ENCODE measurements at regions of chr7 and their contacts with region 1.

Region 1: GRCh38 chr7:121107923-121108498 is 119.5 kb downstream of the CPED1 start:
- DNase-seq: no peak
- ATAC-seq: peak; percentile 77
- H3K4me3 Mint-ChIP-seq: no peak overlapping the region
- H3K27ac Mint-ChIP-seq: no peak overlapping the region
- H3K4me1 Mint-ChIP-seq: no peaks in the 10 kb centered on the region
- H3K27me3 Mint-ChIP-seq: no peaks in the 10 kb centered on the region
- CTCF ChIP-seq: peak; percentile 83

Region 2: DNA sequence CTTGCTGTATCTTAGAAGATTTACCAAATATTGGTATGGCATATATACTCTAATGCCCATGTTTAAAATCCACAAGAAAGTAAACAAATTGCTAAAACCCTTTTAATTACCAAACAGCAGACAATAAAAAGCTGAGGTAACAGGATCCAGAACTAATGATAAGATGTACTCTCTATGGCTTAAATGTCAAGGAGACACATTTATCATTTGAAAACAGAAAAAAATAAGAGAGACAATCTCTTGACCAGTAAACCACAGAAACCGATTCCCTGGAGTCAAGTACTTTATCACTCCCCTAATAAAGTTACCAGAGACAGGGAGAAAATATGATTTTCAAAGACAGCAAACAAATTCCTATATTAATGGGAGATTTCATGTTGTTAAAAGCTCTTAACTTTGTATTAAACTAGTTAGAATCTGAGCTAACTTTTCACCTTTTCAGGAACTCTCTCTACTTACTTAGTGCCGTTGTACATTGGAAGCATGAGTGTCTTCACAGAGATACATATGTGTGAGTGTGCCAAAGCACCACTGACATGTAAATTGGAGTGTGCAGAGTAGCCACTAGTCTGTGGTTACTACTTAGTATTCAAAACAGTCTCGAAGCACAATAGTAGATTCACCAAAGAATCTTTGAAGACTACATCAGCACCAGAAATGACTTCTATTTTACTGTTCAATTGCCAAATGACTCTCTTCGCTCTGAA is 294.3 kb before region 1 on chr7:
- CTCF ChIA-PET with region 1: no interaction called
- POLR2A ChIA-PET with region 1: no interaction called
- intact Hi-C with region 1: no loop called
- DNase-seq: no peak
- ATAC-seq: no peak
- H3K4me3 Mint-ChIP-seq: no peak overlapping the region
- H3K27ac Mint-ChIP-seq: no peak overlapping the region
- H3K4me1 Mint-ChIP-seq: no peaks in the 10 kb centered on the region
- H3K27me3 Mint-ChIP-seq: peaks cover 18% of the 10 kb centered on the region
- CTCF ChIP-seq: no peak

Region 3: GRCh38 chr7:121994625-121995410 is 886.8 kb after region 1 on chr7:
- CTCF ChIA-PET with region 1: no interaction called
- POLR2A ChIA-PET with region 1: no interaction called
- intact Hi-C with region 1: loop called (anchors 5 kb)
- DNase-seq: no peak
- ATAC-seq: peak; percentile 86
- H3K4me3 Mint-ChIP-seq: no peak overlapping the region
- H3K27ac Mint-ChIP-seq: no peak overlapping the region
- H3K4me1 Mint-ChIP-seq: no peaks in the 10 kb centered on the region
- H3K27me3 Mint-ChIP-seq: peaks cover 2% of the 10 kb centered on the region
- CTCF ChIP-seq: peak; percentile 83

Measured in activated B cell treated with CpG ODN at 0.5 μM for 24 hours (primary cell).